HEK293 (cell line): ENCODE measurements at regions of chr22 and their contacts with region 1.

Region 1: GRCh38 chr22:40950962-40951794 is at the start of gene RBX1:
- H3K4me3 ChIP-seq: peak within 1 kb of the TSS; percentile 100
- H3K27ac ChIP-seq: peak within 1 kb of the TSS; percentile 94
- H3K4me1 ChIP-seq: peaks cover 8% of the 10 kb centered on the region
- CTCF ChIP-seq: no peak

Region 2: GRCh38 chr22:40856513-40857308 is 94.5 kb before region 1 on chr22 and contains the starts of genes ST13 and XPNPEP3:
- CTCF ChIA-PET with region 1: no interaction called
- POLR2A ChIA-PET with region 1: interaction called, 13 read pairs
- H3K4me3 ChIP-seq: peak within 1 kb of the TSS; percentile 53
- H3K27ac ChIP-seq: peak within 1 kb of the TSS; percentile 98
- H3K4me1 ChIP-seq: peaks cover 19% of the 10 kb centered on the region
- CTCF ChIP-seq: peak; percentile 46; the same call in 1 of the 2 replicates

Region 3: GRCh38 chr22:40928657-40929056 is 22.5 kb before region 1 on chr22:
- CTCF ChIA-PET with region 1: interaction called, 9 read pairs
- POLR2A ChIA-PET with region 1: interaction called, 14 read pairs
- H3K4me3 ChIP-seq: no peak overlapping the region
- H3K27ac ChIP-seq: no peak overlapping the region
- H3K4me1 ChIP-seq: peaks cover 5% of the 10 kb centered on the region
- CTCF ChIP-seq: no peak

Region 4: GRCh38 chr22:40973099-40973498 is 21.9 kb after region 1 on chr22:
- CTCF ChIA-PET with region 1: interaction called, 3 read pairs
- POLR2A ChIA-PET with region 1: interaction called, 21 read pairs
- H3K4me3 ChIP-seq: no peak overlapping the region
- H3K27ac ChIP-seq: no peak overlapping the region
- H3K4me1 ChIP-seq: no peaks in the 10 kb centered on the region
- CTCF ChIP-seq: no peak

Region 5: DNA sequence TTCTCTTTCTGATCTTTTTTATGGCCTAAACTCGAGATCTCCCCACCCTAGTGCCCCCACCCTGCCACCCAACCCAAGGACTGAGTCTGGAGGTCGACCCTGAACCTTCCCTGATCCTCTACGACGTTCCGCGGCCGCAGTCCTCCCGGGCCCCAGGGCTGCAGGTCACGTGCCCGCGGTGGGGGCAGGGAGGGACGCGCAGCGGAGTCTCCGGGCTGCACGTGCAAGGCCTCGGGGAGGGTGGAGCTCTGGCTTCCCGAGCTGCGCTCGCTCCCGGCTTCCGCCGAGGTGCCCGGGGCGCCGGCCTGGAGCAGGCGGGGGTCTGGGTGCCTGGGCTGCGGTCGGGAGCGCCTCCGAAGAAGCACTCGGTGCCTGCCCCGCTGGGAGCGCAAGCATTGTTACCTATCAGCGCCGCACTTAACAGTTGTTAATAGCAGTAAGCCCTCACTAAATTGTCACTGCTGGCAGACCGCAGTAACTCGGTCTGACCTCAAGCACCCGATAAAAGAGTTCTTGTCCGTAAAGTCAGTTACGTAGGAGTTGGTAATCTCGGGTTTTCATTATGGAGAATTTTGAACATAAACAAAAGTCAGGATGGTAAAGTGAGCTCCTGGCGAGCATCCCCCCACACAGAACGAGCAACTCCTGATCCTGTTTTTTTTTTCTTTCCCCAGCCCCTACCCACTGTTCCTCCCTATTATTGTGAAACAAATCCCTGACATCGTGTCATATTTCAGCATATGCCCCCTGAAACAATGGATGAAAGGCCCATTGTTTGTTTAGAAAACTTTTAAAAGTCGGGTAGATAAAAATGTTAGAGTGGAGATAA is 71.5 kb after region 1 on chr22:
- CTCF ChIA-PET with region 1: no interaction called
- POLR2A ChIA-PET with region 1: interaction called, 48 read pairs
- H3K4me3 ChIP-seq: peak overlapping the region; percentile 68
- H3K27ac ChIP-seq: peak overlapping the region; percentile 89
- H3K4me1 ChIP-seq: peaks cover 5% of the 10 kb centered on the region
- CTCF ChIP-seq: no peak; the same call in 1 of the 2 replicates

Region 6: GRCh38 chr22:41096841-41097240 is 145.7 kb after region 1 on chr22:
- CTCF ChIA-PET with region 1: no interaction called
- POLR2A ChIA-PET with region 1: interaction called, 51 read pairs
- H3K4me3 ChIP-seq: no peak overlapping the region
- H3K27ac ChIP-seq: no peak overlapping the region; the same call in 1 of the 2 replicates
- H3K4me1 ChIP-seq: peaks cover 13% of the 10 kb centered on the region
- CTCF ChIP-seq: no peak